CD8-positive, alpha-beta T cell (primary cell): ENCODE measurements at regions of chr5 and their contacts with region 1.

Region 1: GRCh38 chr5:103364789-103365188 is 106.2 kb downstream of the MACIR start:
- DNase-seq: no peak
- ATAC-seq: no peak
- H3K4me3 ChIP-seq: no peak overlapping the region
- H3K4me3 Mint-ChIP-seq: no peak overlapping the region
- H3K27ac ChIP-seq: no peak overlapping the region
- H3K27ac Mint-ChIP-seq: no peak overlapping the region
- H3K4me1 ChIP-seq: no peaks in the 10 kb centered on the region
- H3K4me1 Mint-ChIP-seq: no peaks in the 10 kb centered on the region
- H3K27me3 ChIP-seq: peaks cover 0 to 2% of the 10 kb centered on the region in 2 experiments
- H3K27me3 Mint-ChIP-seq: no peaks in the 10 kb centered on the region
- CTCF ChIP-seq: no peak

Region 2: DNA sequence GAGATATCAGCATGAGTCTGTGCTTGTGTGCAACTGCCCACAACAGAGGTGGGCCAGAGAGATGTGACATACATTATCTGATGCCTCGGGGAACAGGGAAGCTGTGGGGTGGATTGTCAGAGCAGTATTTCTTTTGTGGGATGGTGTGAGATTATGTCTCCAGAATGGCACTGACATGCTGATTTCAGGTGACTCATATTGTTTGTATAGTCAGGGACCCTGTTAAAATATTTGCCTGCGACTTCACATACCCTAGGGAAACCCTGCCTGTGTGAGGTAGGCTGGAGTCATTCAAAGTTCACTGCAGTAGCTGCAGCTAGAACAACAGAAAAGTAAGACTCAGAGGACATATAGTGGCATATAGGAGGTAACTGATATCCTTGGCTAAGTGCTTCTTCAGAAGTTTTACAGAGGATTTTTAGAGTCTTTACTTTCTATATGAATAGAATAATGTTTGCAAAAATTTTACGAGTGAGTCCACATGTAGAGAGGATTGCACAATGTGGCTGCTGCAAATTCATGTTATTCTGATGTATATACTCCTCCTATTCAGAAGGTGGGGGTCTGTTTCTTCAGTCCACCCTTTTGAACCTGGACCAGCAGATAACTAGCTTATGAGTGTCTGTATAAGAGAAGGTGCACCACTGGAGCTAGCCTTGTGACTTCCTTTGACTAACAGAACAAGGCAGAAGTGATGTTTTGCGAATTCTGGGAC is 16.9 kb before region 1 on chr5:
- CTCF ChIA-PET with region 1: no interaction called
- POLR2A ChIA-PET with region 1: no interaction called
- intact Hi-C with region 1: loop called in 1 of 2 experiments (anchors 1 kb)
- DNase-seq: no peak
- ATAC-seq: no peak
- H3K4me3 ChIP-seq: no peak overlapping the region
- H3K4me3 Mint-ChIP-seq: no peak overlapping the region
- H3K27ac ChIP-seq: no peak overlapping the region
- H3K27ac Mint-ChIP-seq: no peak overlapping the region
- H3K4me1 ChIP-seq: no peaks in the 10 kb centered on the region
- H3K4me1 Mint-ChIP-seq: no peaks in the 10 kb centered on the region
- H3K27me3 ChIP-seq: no peaks in the 10 kb centered on the region
- H3K27me3 Mint-ChIP-seq: peaks cover 15% of the 10 kb centered on the region
- CTCF ChIP-seq: no peak

Region 3: DNA sequence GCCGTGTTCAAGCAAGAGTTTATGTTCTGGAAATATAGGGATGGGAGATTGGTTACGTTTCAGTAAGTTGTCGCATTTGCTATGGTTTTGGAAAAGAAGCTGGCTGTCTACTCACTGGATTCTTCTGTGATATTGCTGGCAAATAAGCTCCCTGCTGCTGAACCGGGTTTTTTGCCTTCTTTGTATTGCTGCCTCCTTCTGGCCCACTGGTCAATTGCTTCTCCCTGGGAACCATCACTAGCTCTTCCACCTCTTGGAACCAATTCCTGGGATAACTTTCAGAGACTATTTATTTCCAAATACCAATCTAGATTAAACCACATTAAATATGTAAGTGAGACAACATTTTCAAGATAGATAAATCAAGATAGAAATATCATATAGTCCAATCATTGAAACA is 154.8 kb after region 1 on chr5:
- CTCF ChIA-PET with region 1: no interaction called
- POLR2A ChIA-PET with region 1: no interaction called
- intact Hi-C with region 1: no loop called
- DNase-seq: no peak
- ATAC-seq: no peak
- H3K4me3 ChIP-seq: no peak overlapping the region
- H3K4me3 Mint-ChIP-seq: no peak overlapping the region
- H3K27ac ChIP-seq: no peak overlapping the region
- H3K27ac Mint-ChIP-seq: no peak overlapping the region
- H3K4me1 ChIP-seq: no peaks in the 10 kb centered on the region
- H3K4me1 Mint-ChIP-seq: no peaks in the 10 kb centered on the region
- H3K27me3 ChIP-seq: no peaks in the 10 kb centered on the region
- H3K27me3 Mint-ChIP-seq: peaks cover 5% of the 10 kb centered on the region
- CTCF ChIP-seq: no peak

Region 4: DNA sequence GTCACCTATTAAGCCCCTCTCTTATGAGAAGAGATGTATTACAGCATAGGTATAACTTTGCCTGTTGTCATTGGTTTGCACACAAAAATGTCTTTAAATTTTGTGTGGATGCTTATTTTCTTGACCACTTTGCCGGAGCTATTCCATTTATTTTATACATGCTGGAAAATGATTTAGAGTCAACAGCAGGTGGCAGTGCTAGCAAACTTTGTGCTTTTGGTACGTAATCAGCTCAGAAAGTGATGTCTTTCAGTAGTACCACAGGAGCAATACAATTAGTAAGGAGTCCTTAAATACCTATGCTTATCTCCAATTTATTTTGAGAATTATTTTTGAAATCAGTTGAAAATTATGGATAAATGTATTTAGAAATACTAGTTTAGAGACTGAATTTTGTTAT is 217.6 kb after region 1 on chr5:
- CTCF ChIA-PET with region 1: no interaction called
- POLR2A ChIA-PET with region 1: no interaction called
- intact Hi-C with region 1: no loop called
- DNase-seq: peak in 1 of 9 experiments; percentile 5
- ATAC-seq: no peak
- H3K4me3 ChIP-seq: no peak overlapping the region
- H3K4me3 Mint-ChIP-seq: no peak overlapping the region
- H3K27ac ChIP-seq: no peak overlapping the region
- H3K27ac Mint-ChIP-seq: no peak overlapping the region
- H3K4me1 ChIP-seq: no peaks in the 10 kb centered on the region
- H3K4me1 Mint-ChIP-seq: no peaks in the 10 kb centered on the region
- H3K27me3 ChIP-seq: no peaks in the 10 kb centered on the region
- H3K27me3 Mint-ChIP-seq: peaks cover 2% of the 10 kb centered on the region
- CTCF ChIP-seq: no peak